H1 (cell line): ENCODE measurements at regions of chr19 and their contacts with region 1.

Region 1: DNA sequence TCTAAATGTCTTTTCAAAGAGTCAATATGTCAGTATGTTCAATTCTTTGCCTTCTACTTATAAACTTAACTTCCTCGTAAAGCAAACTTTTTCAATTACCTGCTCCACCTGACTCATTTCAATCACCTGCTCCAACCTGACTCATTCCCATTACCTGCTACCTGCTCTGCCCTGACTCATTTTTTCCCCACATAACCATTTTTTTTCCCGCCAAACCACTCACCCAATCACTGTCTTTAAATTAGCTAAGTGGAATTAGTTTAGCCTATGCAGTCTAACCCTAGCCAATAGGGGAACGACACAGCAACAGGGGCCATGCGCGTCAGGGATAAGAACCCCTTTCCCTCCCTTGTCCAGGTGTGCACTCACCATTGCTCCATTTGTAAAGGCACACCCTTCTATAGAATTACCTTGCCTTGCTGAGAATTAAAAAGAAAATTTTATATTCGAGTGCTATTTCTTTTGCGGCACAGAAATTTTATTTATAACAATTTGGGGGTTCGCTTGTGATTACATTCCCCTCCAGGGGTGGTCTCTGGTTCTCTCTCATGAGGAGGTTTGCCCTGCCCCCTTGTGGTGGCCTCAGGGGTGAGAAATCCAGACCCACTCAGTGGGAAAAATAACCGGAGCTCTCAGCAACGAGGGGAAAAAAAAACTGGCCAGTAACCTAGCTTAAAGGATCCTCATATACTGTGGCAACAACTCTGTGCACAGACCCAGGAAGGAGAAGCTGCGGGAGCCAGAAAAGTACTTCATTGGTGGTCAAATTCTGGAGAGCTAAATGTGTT is 193.1 kb downstream of the ZNF486 start:
- DNase-seq: peak in 1 of 2 experiments; percentile 88
- H3K4me3 ChIP-seq: no peak overlapping the region
- H3K27ac ChIP-seq: no peak overlapping the region
- H3K4me1 ChIP-seq: peaks cover 2 to 6% (median 4%) of the 10 kb centered on the region in 4 experiments; a peak in 4 of 7 replicates
- H3K27me3 ChIP-seq: peaks cover 0 to 3% (median under 1%) of the 10 kb centered on the region in 4 experiments; a peak in 3 of 7 replicates
- CTCF ChIP-seq: peak; percentile 65 to 77 (median 66)
- EP300 ChIP-seq: no peak
- POLR2A ChIP-seq: no peak
- RAD21 ChIP-seq: peak; percentile 85 to 90

Region 2: GRCh38 chr19:20247016-20247683 is 113.0 kb before region 1 on chr19:
- CTCF ChIA-PET with region 1: interaction called, 25 read pairs
- POLR2A ChIA-PET with region 1: interaction called, 8 read pairs
- DNase-seq: peak in 1 of 2 experiments; percentile 72
- H3K4me3 ChIP-seq: no peak overlapping the region
- H3K27ac ChIP-seq: no peak overlapping the region
- H3K4me1 ChIP-seq: peaks cover 4 to 12% (median 6%) of the 10 kb centered on the region in 4 experiments; a peak in 4 of 7 replicates
- H3K27me3 ChIP-seq: no peaks in the 10 kb centered on the region; a peak in 1 of 7 replicates
- CTCF ChIP-seq: peak; percentile 57 to 77 (median 71)
- EP300 ChIP-seq: no peak
- POLR2A ChIP-seq: no peak
- RAD21 ChIP-seq: peak; percentile 94 to 95

Region 3: DNA sequence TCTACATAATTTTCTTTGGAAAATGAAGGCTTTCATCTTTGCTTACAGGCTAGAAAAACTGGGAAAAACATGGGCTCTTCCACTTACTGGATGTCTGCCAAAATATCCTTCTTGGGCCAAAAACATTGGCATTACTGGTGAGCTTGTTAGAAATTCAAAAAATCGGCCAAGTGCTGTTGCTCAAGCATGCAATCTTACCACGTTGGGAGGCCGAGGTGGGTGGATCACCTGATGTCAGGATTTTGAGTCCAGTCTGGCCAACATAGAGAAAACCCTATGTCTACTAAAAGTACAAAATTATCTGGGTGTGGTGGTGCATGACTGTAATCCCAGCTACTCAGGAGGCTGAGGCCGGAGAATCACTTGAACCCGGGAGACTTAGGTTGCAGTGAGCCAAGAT is 28.7 kb after region 1 on chr19:
- CTCF ChIA-PET with region 1: no interaction called
- POLR2A ChIA-PET with region 1: no interaction called
- DNase-seq: no peak
- H3K4me3 ChIP-seq: no peak overlapping the region
- H3K27ac ChIP-seq: no peak overlapping the region
- H3K4me1 ChIP-seq: no peaks in the 10 kb centered on the region
- H3K27me3 ChIP-seq: no peaks in the 10 kb centered on the region
- CTCF ChIP-seq: no peak
- EP300 ChIP-seq: no peak
- POLR2A ChIP-seq: no peak
- RAD21 ChIP-seq: no peak